CD4-positive, alpha-beta T cell (primary cell): ENCODE measurements at regions of chr2 and their contacts with region 1.

Region 1: DNA sequence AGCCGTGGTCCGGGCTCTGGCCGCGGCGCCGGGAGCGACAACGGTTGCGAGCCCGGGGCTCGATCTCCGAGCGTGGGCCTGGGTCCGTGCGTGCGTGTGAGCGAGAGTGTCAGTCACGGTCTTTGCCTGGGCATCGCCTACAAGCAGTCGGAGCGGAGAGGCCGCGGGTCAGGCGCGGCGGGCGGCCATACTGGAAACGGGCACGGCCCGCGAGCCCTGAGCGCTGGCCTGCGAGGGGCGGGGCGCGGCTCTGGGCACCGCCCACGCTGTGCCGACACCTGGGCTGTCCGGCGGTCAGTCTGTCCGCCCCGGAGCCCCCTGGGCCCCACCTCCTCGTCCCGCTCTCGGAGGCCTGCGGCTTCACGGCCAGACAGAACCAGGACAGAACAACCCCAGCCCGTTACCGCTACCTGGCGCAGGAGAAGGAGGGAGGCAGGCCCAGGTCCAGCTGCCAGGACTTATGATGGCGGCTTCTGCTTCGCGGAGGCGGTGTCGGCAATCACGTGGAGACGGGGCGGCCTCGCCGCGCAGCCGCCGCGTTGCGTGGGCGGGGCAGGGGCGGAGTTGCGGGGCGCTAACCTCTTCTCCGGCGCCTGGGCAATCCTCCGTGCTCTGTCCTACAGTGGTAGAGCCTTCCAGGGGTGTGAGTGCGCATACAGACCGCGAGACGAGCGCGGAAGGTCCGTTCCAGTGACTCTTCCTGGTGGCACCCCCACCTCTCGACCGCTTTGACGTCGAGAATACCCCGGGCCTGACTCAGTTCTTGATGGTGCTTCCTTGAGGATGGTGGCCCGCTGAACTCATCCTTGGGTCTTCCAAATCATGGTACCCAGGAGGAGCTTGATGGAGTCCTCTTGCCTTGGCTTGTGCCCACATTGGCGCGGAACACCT is at the start of gene TMEM131:
- DNase-seq: peak; percentile 90 to 97 (median 96)
- ATAC-seq: peak; percentile 87
- H3K4me3 ChIP-seq: peak within 1 kb of the TSS; percentile 70
- H3K4me3 Mint-ChIP-seq: peak within 1 kb of the TSS; percentile 94
- H3K27ac ChIP-seq: peak within 1 kb of the TSS; percentile 88 to 93
- H3K27ac Mint-ChIP-seq: peak within 1 kb of the TSS; percentile 86
- H3K4me1 ChIP-seq: peaks cover 17% of the 10 kb centered on the region
- H3K4me1 Mint-ChIP-seq: peaks cover 45% of the 10 kb centered on the region
- H3K27me3 ChIP-seq: no peaks in the 10 kb centered on the region
- H3K27me3 Mint-ChIP-seq: no peaks in the 10 kb centered on the region
- CTCF ChIP-seq: no peak
- total RNA-seq, gene TMEM131: 29.2 to 33.6 TPM

Region 2: DNA sequence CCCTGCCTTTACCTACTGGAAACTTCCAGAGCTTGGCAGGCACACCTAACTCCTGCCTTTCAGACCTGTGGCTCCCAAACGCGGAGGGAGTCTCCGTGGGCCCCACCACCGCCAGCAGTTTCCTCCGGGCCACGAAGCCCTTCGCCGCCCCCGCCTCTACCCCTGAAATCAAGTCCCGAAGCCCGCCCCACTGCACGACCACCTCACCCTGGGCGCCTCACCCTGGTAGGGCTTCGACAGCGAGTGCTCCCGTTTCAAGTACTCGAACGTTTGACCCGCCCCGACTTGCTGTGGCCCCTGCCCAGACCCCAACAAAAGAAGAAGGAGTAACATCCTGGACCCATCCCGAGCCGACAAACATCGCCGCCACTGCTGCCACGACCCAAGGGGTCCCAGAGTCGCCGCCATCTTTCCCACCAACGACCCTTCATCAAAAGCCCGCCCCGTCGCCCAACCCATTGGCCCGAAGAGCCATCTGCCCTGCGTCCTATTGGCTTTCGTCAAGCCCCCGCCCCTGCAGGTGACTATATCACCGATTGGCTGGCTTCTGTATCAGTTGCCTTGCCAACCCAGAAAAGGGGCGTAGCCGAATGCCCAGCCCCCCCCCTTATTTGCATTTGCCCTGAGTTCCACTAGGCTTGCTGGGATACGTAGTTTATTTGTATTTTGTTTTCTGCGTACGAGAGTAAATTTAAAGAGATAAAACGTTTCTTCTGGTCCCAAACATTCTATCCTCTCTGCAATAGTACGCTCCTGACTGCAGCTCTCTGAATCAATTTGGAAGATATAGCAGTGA is 1256.1 kb before region 1 on chr2 and contains the start of gene LMAN2L:
- CTCF ChIA-PET with region 1: no interaction called
- POLR2A ChIA-PET with region 1: no interaction called
- intact Hi-C with region 1: loop called in 1 of 2 experiments (anchors 10 kb)
- DNase-seq: peak; percentile 88 to 99 (median 96)
- ATAC-seq: peak; percentile 98
- H3K4me3 ChIP-seq: peak within 1 kb of the TSS; percentile 94
- H3K4me3 Mint-ChIP-seq: peak within 1 kb of the TSS; percentile 97
- H3K27ac ChIP-seq: peak within 1 kb of the TSS; percentile 21 to 78
- H3K27ac Mint-ChIP-seq: peak within 1 kb of the TSS; percentile 82
- H3K4me1 ChIP-seq: peaks cover 25% of the 10 kb centered on the region
- H3K4me1 Mint-ChIP-seq: peaks cover 35% of the 10 kb centered on the region
- H3K27me3 ChIP-seq: no peaks in the 10 kb centered on the region
- H3K27me3 Mint-ChIP-seq: no peaks in the 10 kb centered on the region
- CTCF ChIP-seq: no peak
- total RNA-seq, gene LMAN2L: 1.1 to 1.8 TPM

Region 3: GRCh38 chr2:97663965-97664635 is 331.9 kb before region 1 on chr2 and contains the start of gene ACTR1B:
- CTCF ChIA-PET with region 1: no interaction called
- POLR2A ChIA-PET with region 1: no interaction called
- intact Hi-C with region 1: loop called in 1 of 2 experiments (anchors 5 kb)
- DNase-seq: peak; percentile 94 to 99 (median 96)
- ATAC-seq: peak; percentile 86
- H3K4me3 ChIP-seq: peak within 1 kb of the TSS; percentile 96
- H3K4me3 Mint-ChIP-seq: peak within 1 kb of the TSS; percentile 100
- H3K27ac ChIP-seq: peak within 1 kb of the TSS; percentile 93 to 98
- H3K27ac Mint-ChIP-seq: peak within 1 kb of the TSS; percentile 99
- H3K4me1 ChIP-seq: peaks cover 34% of the 10 kb centered on the region
- H3K4me1 Mint-ChIP-seq: peaks cover 31% of the 10 kb centered on the region
- H3K27me3 ChIP-seq: no peaks in the 10 kb centered on the region
- H3K27me3 Mint-ChIP-seq: no peaks in the 10 kb centered on the region
- CTCF ChIP-seq: peak; percentile 66
- total RNA-seq, gene ACTR1B: 89.5 to 92.8 TPM

Region 4: GRCh38 chr2:97957432-97958186 is 38.4 kb before region 1 on chr2:
- CTCF ChIA-PET with region 1: no interaction called
- POLR2A ChIA-PET with region 1: no interaction called
- intact Hi-C with region 1: loop called in 1 of 2 experiments (anchors 5 kb)
- DNase-seq: peak in 1 of 14 experiments; percentile 6
- ATAC-seq: peak; percentile 66
- H3K4me3 ChIP-seq: no peak overlapping the region
- H3K4me3 Mint-ChIP-seq: peak overlapping the region; percentile 49
- H3K27ac ChIP-seq: no peak overlapping the region
- H3K27ac Mint-ChIP-seq: peak overlapping the region; percentile 31
- H3K4me1 ChIP-seq: peaks cover 6% of the 10 kb centered on the region
- H3K4me1 Mint-ChIP-seq: peaks cover 84% of the 10 kb centered on the region
- H3K27me3 ChIP-seq: no peaks in the 10 kb centered on the region
- H3K27me3 Mint-ChIP-seq: no peaks in the 10 kb centered on the region
- CTCF ChIP-seq: no peak

Region 5: GRCh38 chr2:98157557-98157956 is 161.6 kb after region 1 on chr2:
- CTCF ChIA-PET with region 1: no interaction called
- POLR2A ChIA-PET with region 1: no interaction called
- intact Hi-C with region 1: no loop called
- DNase-seq: no peak
- ATAC-seq: no peak
- H3K4me3 ChIP-seq: no peak overlapping the region
- H3K4me3 Mint-ChIP-seq: no peak overlapping the region
- H3K27ac ChIP-seq: no peak overlapping the region
- H3K27ac Mint-ChIP-seq: no peak overlapping the region
- H3K4me1 ChIP-seq: no peaks in the 10 kb centered on the region
- H3K4me1 Mint-ChIP-seq: no peaks in the 10 kb centered on the region
- H3K27me3 ChIP-seq: peaks cover 0 to 3% of the 10 kb centered on the region in 2 experiments
- H3K27me3 Mint-ChIP-seq: peaks cover 37% of the 10 kb centered on the region
- CTCF ChIP-seq: no peak

Region 6: DNA sequence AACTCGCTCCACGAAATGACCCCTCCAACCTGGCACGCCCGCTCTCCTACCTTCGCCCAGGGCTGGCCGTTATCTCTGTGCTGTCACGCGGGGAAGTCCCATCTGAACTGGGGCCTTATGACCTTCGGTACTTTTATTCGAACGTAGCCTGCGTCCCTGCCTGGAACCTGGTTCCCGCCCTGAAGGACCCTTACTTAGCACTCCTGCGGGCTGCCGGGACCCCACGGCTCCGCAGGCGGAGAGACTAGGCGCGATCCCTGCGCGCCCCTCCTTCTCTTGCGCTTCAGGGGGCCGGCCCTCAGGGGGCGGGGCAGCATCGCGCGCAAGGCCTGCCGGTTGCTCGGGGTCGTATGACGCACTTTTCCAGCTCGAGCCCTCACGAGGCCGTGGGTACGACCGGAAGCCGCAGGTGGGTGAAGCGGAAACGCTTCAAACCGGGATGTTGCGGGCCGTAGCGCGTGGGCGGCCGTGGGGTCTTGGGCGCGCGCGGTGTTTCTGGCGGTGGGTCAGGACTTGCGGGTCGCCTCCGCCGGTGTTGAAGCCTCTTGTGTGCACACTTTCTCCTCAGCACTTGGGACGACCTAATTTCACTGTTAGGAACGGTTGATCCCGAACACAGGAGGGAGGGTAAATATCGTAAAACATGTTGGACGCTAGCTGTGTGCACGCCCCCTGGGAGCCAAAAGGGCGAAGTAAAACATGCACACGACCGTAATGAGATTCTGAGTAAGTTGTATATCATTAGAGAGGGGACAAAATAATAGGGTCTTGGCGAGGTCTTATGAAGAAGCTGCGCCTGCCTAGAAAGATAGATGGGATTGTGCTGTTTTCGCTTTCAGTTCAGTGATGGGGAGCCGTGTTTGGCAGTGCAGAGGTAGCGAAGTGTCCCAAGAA is 1158.9 kb after region 1 on chr2 and contains the starts of genes LIPT1 and TSGA10:
- CTCF ChIA-PET with region 1: no interaction called
- POLR2A ChIA-PET with region 1: no interaction called
- intact Hi-C with region 1: loop called in 1 of 2 experiments (anchors 10 kb)
- DNase-seq: peak; percentile 81 to 97 (median 89)
- ATAC-seq: peak; percentile 93
- H3K4me3 ChIP-seq: peak within 1 kb of the TSS; percentile 69
- H3K4me3 Mint-ChIP-seq: no peak within 1 kb of the TSS
- H3K27ac ChIP-seq: peak within 1 kb of the TSS; percentile 93 to 95
- H3K27ac Mint-ChIP-seq: no peak within 1 kb of the TSS
- H3K4me1 ChIP-seq: peaks cover 21% of the 10 kb centered on the region
- H3K4me1 Mint-ChIP-seq: peaks cover 43% of the 10 kb centered on the region
- H3K27me3 ChIP-seq: no peaks in the 10 kb centered on the region
- H3K27me3 Mint-ChIP-seq: no peaks in the 10 kb centered on the region
- CTCF ChIP-seq: no peak
- total RNA-seq, gene LIPT1: 12.5 to 13.3 TPM
- total RNA-seq, gene TSGA10: 10.6 to 11.0 TPM

Region 7: GRCh38 chr2:99337113-99338028 is 1341.4 kb after region 1 on chr2 and contains the start of gene EIF5B:
- CTCF ChIA-PET with region 1: no interaction called
- POLR2A ChIA-PET with region 1: no interaction called
- intact Hi-C with region 1: loop called in 1 of 2 experiments (anchors 10 kb)
- DNase-seq: peak; percentile 82 to 97 (median 93)
- ATAC-seq: peak; percentile 58
- H3K4me3 ChIP-seq: peak within 1 kb of the TSS; percentile 89
- H3K4me3 Mint-ChIP-seq: no peak within 1 kb of the TSS
- H3K27ac ChIP-seq: peak within 1 kb of the TSS; percentile 72 to 79
- H3K27ac Mint-ChIP-seq: no peak within 1 kb of the TSS
- H3K4me1 ChIP-seq: peaks cover 29% of the 10 kb centered on the region
- H3K4me1 Mint-ChIP-seq: peaks cover 40% of the 10 kb centered on the region
- H3K27me3 ChIP-seq: no peaks in the 10 kb centered on the region
- H3K27me3 Mint-ChIP-seq: no peaks in the 10 kb centered on the region
- CTCF ChIP-seq: peak; percentile 74
- total RNA-seq, gene EIF5B: 27.8 to 33.2 TPM